Activated B cell treated with CpG ODN at 0.5 μM for 24 hours (primary cell): ENCODE measurements at regions of chr3 and their contacts with region 1.

Region 1: DNA sequence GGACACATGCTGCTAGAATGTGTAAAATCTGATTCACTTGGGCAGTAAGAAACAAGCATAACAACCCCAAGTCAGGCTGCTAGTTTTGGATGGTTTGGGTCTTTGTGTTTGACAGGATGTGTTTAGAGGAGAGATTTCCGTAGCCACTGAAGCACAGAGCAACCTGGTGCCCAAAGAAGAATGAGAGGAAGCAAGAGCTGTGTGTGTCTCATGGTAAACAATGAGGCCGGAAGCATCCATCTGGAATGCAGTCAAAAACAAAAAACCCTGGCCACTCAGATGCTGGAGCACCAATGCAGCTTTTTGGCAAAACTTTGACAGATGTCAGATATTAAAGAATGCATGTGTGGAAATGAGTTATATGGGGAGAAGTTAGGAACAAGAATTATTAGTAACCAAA is 39.4 kb upstream of the SNRK start:
- DNase-seq: no peak
- ATAC-seq: peak; percentile 21
- H3K4me3 Mint-ChIP-seq: peak overlapping the region; percentile 12
- H3K27ac Mint-ChIP-seq: peak overlapping the region; percentile 13
- H3K4me1 Mint-ChIP-seq: peaks cover 47% of the 10 kb centered on the region
- H3K27me3 Mint-ChIP-seq: peaks cover 3% of the 10 kb centered on the region
- CTCF ChIP-seq: no peak

Region 2: GRCh38 chr3:43231276-43232000 is 15.5 kb before region 1 on chr3:
- CTCF ChIA-PET with region 1: no interaction called
- POLR2A ChIA-PET with region 1: no interaction called
- intact Hi-C with region 1: no loop called
- DNase-seq: no peak
- ATAC-seq: no peak
- H3K4me3 Mint-ChIP-seq: no peak overlapping the region
- H3K27ac Mint-ChIP-seq: no peak overlapping the region
- H3K4me1 Mint-ChIP-seq: no peaks in the 10 kb centered on the region
- H3K27me3 Mint-ChIP-seq: peaks cover 7% of the 10 kb centered on the region
- CTCF ChIP-seq: no peak

Region 3: GRCh38 chr3:43326891-43327581 is 80.1 kb after region 1 on chr3:
- CTCF ChIA-PET with region 1: no interaction called
- POLR2A ChIA-PET with region 1: no interaction called
- intact Hi-C with region 1: loop called (anchors 5 kb)
- DNase-seq: no peak
- ATAC-seq: no peak
- H3K4me3 Mint-ChIP-seq: no peak overlapping the region
- H3K27ac Mint-ChIP-seq: peak overlapping the region; percentile 76
- H3K4me1 Mint-ChIP-seq: peaks cover 55% of the 10 kb centered on the region
- H3K27me3 Mint-ChIP-seq: no peaks in the 10 kb centered on the region
- CTCF ChIP-seq: no peak

Region 4: GRCh38 chr3:43369404-43370292 is 122.7 kb after region 1 on chr3:
- CTCF ChIA-PET with region 1: no interaction called
- POLR2A ChIA-PET with region 1: no interaction called
- intact Hi-C with region 1: no loop called
- DNase-seq: no peak
- ATAC-seq: no peak
- H3K4me3 Mint-ChIP-seq: no peak overlapping the region
- H3K27ac Mint-ChIP-seq: no peak overlapping the region
- H3K4me1 Mint-ChIP-seq: no peaks in the 10 kb centered on the region
- H3K27me3 Mint-ChIP-seq: no peaks in the 10 kb centered on the region
- CTCF ChIP-seq: no peak

Region 5: DNA sequence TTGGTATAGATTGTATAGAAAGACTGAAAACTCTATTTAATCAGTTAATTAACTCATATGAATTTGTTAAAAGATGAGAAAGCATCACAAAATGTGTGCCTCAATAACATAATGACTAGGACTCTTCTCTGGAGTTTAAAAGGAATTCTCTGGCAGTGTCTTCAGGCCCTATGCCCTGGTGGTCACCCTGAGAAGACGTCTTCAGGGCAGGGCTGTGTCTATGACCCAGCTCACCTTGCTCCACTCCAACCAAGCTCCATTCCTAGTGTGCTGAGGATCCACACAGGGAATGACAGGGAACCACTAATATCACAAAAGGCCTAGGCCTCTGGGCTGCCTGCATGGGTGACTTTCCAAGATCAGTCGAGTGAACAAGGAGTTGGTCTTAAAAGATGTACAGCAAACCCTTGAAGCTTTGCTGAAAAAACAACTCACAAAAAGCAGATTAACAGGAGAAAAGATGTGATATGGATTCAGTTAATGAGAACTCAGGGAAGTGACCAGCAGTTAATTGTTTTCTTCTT is 196.0 kb after region 1 on chr3:
- CTCF ChIA-PET with region 1: no interaction called
- POLR2A ChIA-PET with region 1: no interaction called
- intact Hi-C with region 1: no loop called
- DNase-seq: no peak
- ATAC-seq: no peak
- H3K4me3 Mint-ChIP-seq: no peak overlapping the region
- H3K27ac Mint-ChIP-seq: no peak overlapping the region
- H3K4me1 Mint-ChIP-seq: no peaks in the 10 kb centered on the region
- H3K27me3 Mint-ChIP-seq: no peaks in the 10 kb centered on the region
- CTCF ChIP-seq: no peak